Body of pancreas (tissue), 4 donors: ENCODE measurements at regions of chr1 and their contacts with region 1.

Region 1: DNA sequence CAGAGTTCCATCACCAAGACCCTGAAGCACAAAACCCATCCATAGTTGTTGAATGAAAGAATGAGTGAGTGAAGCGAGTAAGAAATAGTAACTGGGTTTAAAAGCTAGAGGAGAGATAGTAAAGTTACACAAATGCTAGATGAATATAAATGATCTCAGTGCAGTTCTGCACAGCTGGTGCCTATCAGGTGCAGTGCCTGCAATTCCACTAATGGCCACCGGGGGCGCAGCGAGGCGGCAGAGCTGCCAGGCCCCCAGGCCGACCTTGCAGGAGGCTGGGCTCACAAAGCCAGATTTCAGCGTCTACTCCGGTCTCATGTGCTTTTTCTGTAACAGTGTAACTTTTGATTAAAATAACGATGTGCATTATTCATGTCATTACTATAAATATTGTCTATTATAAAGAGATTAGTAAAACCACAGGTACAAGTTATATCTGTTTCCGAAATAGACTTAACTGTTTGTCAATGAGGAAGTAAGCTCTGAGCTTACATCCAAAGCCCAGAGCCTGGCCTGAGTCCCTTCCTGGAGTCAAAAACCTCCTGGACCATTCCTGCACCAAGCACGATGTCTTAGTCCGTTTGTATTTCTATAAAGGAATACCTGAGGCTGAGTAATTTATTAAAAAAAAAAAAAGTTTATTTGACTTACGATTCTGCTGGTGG is 477.6 kb downstream of the NPHP4 start:
- DNase-seq: peak; percentile 70 to 85 (median 78)
- ATAC-seq: peak; percentile 76
- H3K4me3 ChIP-seq: no peak overlapping the region
- H3K27ac ChIP-seq: peak overlapping the region in 1 of 4 donors; percentile 42
- H3K4me1 ChIP-seq: peaks cover 19% of the 10 kb centered on the region
- H3K27me3 ChIP-seq: no peaks in the 10 kb centered on the region
- CTCF ChIP-seq: peak; percentile 93 to 100 (median 95)
- POLR2A ChIP-seq: no peak

Region 2: DNA sequence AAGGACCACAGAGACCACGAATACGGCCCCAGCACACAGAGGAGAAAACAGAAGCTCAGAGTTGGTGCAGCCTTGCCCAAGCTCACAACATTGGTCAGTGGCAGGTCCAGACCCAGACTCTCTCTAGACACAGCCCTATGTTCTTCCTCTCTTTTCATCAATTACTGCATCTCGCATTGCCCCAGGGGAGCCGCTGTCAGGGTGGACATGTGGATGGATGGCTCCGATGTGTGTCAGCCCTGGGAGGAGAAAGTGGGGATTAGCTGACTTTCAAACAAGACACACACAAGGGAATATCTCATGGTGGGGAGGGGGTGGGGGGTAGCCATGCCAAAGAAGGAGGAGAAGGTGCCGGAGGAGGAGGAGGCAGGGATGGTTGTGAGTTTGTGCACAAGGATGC is 79.2 kb before region 1 on chr1:
- intact Hi-C with region 1: no loop called
- DNase-seq: no peak
- ATAC-seq: no peak
- H3K4me3 ChIP-seq: no peak overlapping the region
- H3K27ac ChIP-seq: no peak overlapping the region
- H3K4me1 ChIP-seq: no peaks in the 10 kb centered on the region
- H3K27me3 ChIP-seq: no peaks in the 10 kb centered on the region
- CTCF ChIP-seq: no peak
- POLR2A ChIP-seq: no peak

Region 3: GRCh38 chr1:5745776-5746610 is 231.3 kb after region 1 on chr1:
- intact Hi-C with region 1: loop called (anchors 10 kb)
- DNase-seq: peak; percentile 70 to 72 (median 70)
- ATAC-seq: peak; percentile 85
- H3K4me3 ChIP-seq: no peak overlapping the region
- H3K27ac ChIP-seq: no peak overlapping the region
- H3K4me1 ChIP-seq: no peaks in the 10 kb centered on the region
- H3K27me3 ChIP-seq: peaks cover 0 to 18% of the 10 kb centered on the region in 2 donors
- CTCF ChIP-seq: peak; percentile 89 to 94 (median 92)
- POLR2A ChIP-seq: no peak

Region 4: GRCh38 chr1:5915587-5916571 is 401.2 kb after region 1 on chr1:
- intact Hi-C with region 1: loop called (anchors 10 kb)
- DNase-seq: peak in 3 of 4 donors; percentile 33 to 58 (median 51)
- ATAC-seq: peak; percentile 71
- H3K4me3 ChIP-seq: no peak overlapping the region
- H3K27ac ChIP-seq: no peak overlapping the region
- H3K4me1 ChIP-seq: peaks cover 8% of the 10 kb centered on the region
- H3K27me3 ChIP-seq: no peaks in the 10 kb centered on the region
- CTCF ChIP-seq: peak; percentile 32 to 75 (median 68)
- POLR2A ChIP-seq: no peak

Region 5: GRCh38 chr1:5975133-5975880 is 460.7 kb after region 1 on chr1:
- intact Hi-C with region 1: loop called (anchors 5 kb)
- DNase-seq: peak; percentile 70 to 79 (median 71)
- ATAC-seq: peak; percentile 72
- H3K4me3 ChIP-seq: no peak overlapping the region
- H3K27ac ChIP-seq: no peak overlapping the region
- H3K4me1 ChIP-seq: peaks cover 19% of the 10 kb centered on the region
- H3K27me3 ChIP-seq: no peaks in the 10 kb centered on the region
- CTCF ChIP-seq: peak; percentile 60 to 89 (median 84)
- POLR2A ChIP-seq: no peak